Naive thymus-derived CD4-positive, alpha-beta T cell (primary cell): ENCODE measurements at regions of chr7 and their contacts with region 1.

Region 1: GRCh38 chr7:80699045-80699638 is 60.7 kb downstream of the CD36 start:
- DNase-seq: peak in 1 of 9 donors; percentile 7
- ATAC-seq: no peak
- H3K4me3 ChIP-seq: no peak overlapping the region
- H3K4me3 Mint-ChIP-seq: no peak overlapping the region
- H3K27ac ChIP-seq: no peak overlapping the region
- H3K27ac Mint-ChIP-seq: no peak overlapping the region
- H3K4me1 ChIP-seq: no peaks in the 10 kb centered on the region
- H3K4me1 Mint-ChIP-seq: peaks cover 0 to 1% (median 0%) of the 10 kb centered on the region in 7 donors
- H3K27me3 ChIP-seq: no peaks in the 10 kb centered on the region
- H3K27me3 Mint-ChIP-seq: no peaks in the 10 kb centered on the region

Region 2: GRCh38 chr7:81469869-81470723 is 771.0 kb after region 1 on chr7:
- CTCF ChIA-PET with region 1: no interaction called
- POLR2A ChIA-PET with region 1: no interaction called
- intact Hi-C with region 1: loop called in 1 of 2 experiments (anchors 2 kb)
- DNase-seq: peak in 1 of 9 donors; percentile 7
- ATAC-seq: peak; percentile 46
- H3K4me3 ChIP-seq: no peak overlapping the region
- H3K4me3 Mint-ChIP-seq: no peak overlapping the region
- H3K27ac ChIP-seq: no peak overlapping the region
- H3K27ac Mint-ChIP-seq: no peak overlapping the region
- H3K4me1 ChIP-seq: no peaks in the 10 kb centered on the region
- H3K4me1 Mint-ChIP-seq: peaks cover 0 to 1% (median 0%) of the 10 kb centered on the region in 7 donors
- H3K27me3 ChIP-seq: no peaks in the 10 kb centered on the region
- H3K27me3 Mint-ChIP-seq: no peaks in the 10 kb centered on the region